IMR-90 (cell line): ENCODE measurements at regions of chr9 and their contacts with region 1.

Region 1: DNA sequence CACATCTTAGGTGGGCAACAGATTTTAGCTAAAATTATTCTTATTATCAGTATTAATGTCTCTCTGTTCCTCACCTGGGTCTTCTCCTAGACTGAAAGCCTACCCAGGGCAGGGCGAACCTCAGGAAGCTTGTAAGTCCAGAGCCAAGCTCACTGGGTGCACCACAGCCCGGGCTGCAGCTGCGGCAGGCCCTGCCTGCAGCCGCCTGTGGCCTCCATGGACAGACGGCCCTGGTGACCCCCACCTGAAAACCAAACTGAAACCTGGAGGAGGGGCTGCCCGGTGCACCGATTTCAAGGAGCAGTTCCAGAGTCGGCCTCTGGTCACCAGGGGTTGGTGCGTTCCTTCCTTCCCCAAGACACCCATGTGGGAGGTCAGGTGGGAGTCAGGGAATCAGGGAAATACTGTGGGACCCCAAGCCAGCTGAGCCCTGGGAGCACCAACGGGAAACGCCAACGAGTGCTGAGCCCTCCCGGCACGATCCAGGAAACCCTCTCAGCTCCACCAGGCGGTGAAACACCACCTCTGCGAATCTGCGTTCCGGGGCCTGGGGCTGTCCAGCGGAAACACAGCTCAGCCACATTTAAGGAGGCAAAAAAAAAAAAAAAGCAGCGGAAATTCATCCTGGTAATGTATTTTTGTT is 68.6 kb upstream of the PPP1R26 start:
- DNase-seq: no peak
- ATAC-seq: no peak
- H3K4me3 ChIP-seq: no peak overlapping the region
- H3K27ac ChIP-seq: no peak overlapping the region
- H3K4me1 ChIP-seq: no peaks in the 10 kb centered on the region
- H3K27me3 ChIP-seq: peaks cover 5% of the 10 kb centered on the region; the same call in 1 of the 2 replicates
- CTCF ChIP-seq: no peak
- POLR2A ChIP-seq: no peak
- RAD21 ChIP-seq: no peak

Region 2: DNA sequence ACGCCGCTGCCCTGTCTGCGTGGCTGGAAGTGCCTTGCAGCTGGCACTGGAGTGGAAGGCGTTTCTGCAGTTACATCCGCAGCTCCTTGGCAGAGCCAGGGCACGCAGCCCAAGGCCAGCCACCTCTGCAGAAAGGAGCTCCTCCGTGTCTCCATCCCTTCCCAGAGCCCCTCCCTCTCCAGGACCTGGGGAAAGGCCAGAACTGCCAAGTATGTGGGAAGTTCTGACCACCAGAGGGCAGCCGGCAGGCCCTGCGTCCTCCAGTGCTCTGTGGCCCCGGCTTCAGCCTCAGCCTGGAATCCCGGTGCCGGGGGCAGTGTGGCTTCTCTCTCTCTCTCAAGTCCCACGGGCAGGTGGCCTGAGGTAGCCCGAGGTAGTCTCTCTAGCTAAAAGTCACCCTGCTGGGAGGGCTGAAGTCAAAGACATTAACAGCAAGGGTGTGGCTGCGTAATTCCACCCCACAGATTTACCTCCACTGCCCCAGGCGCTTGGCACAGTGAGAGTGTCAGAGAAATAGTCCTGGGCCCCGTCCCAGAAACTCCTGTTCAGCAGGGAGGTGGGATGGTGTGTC is 632.0 kb before region 1 on chr9:
- CTCF ChIA-PET with region 1: no interaction called
- POLR2A ChIA-PET with region 1: no interaction called
- dilution Hi-C with region 1: no loop called
- in situ Hi-C with region 1: no loop called
- intact Hi-C with region 1: loop called (anchors 10 kb)
- DNase-seq: peak; percentile 46
- ATAC-seq: peak; percentile 30
- H3K4me3 ChIP-seq: no peak overlapping the region
- H3K27ac ChIP-seq: no peak overlapping the region
- H3K4me1 ChIP-seq: peaks cover 41% of the 10 kb centered on the region
- H3K27me3 ChIP-seq: no peaks in the 10 kb centered on the region
- CTCF ChIP-seq: peak; percentile 58
- POLR2A ChIP-seq: no peak
- RAD21 ChIP-seq: peak; percentile 28; the same call in 1 of the 2 replicates